ENCODE measurements at regions of chr15 and their contacts with region 1.

Region 1: GRCh38 chr15:41779662-41780157 is 5.4 kb downstream of the MAPKBP1 start:
- DNase-seq: no peak
- ATAC-seq: no peak
- H3K4me3 Mint-ChIP-seq: no peak overlapping the region
- H3K27ac Mint-ChIP-seq: peak overlapping the region; percentile 63
- H3K4me1 Mint-ChIP-seq: peaks cover 61% of the 10 kb centered on the region
- H3K27me3 Mint-ChIP-seq: no peaks in the 10 kb centered on the region

Region 2: GRCh38 chr15:41727143-41727542 is 52.6 kb before region 1 on chr15:
- CTCF ChIA-PET with region 1: no interaction called
- DNase-seq: no peak
- ATAC-seq: no peak
- H3K4me3 Mint-ChIP-seq: no peak overlapping the region
- H3K27ac Mint-ChIP-seq: no peak overlapping the region
- H3K4me1 Mint-ChIP-seq: no peaks in the 10 kb centered on the region
- H3K27me3 Mint-ChIP-seq: no peaks in the 10 kb centered on the region

Region 3: DNA sequence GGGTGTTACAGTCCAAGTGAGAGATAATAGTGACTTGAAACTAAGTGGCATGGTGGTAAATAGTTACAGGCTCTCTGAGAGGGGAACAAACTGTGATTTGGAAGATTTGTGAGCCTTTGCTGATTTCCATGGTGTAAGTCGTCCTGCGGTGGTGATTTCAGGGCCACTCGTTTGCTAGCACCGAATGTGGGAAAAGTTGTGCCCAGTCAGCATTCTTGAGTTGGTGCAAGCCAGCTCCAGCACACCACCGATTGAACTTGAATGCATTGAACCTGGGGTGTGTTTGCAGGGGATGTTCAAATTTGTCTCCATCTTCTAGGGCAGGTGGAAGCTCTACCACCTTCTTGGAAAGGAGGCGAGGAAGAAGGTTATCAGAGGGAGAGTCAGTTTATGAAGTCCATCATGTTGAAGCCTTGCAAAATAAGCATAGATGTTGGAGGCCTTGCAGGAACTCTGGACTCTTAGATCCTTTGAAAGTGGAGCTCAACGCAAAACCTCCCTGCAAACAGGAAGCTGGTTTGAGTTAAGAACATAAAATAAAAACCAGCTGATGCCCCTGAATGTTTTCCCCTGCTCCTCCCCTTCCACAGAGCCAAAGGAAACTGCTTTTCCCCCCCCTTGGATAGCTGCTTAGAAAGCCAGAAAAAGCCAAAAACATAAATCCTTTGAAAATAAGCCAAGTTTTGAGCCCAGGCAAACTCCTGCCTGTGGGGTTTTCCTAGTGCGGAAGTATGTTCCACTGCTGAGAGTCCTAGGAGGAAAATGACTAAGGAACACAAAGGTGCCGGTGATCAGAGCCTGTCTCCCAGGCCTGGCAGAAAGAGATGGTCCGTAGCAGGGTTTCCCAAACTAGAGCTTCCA is 16.5 kb after region 1 on chr15:
- CTCF ChIA-PET with region 1: interaction called, 98 read pairs
- DNase-seq: no peak
- ATAC-seq: no peak
- H3K4me3 Mint-ChIP-seq: no peak overlapping the region
- H3K27ac Mint-ChIP-seq: no peak overlapping the region
- H3K4me1 Mint-ChIP-seq: peaks cover 16% of the 10 kb centered on the region
- H3K27me3 Mint-ChIP-seq: no peaks in the 10 kb centered on the region

Region 4: GRCh38 chr15:41849861-41850260 is 70.2 kb after region 1 on chr15:
- CTCF ChIA-PET with region 1: no interaction called
- DNase-seq: no peak
- ATAC-seq: no peak
- H3K4me3 Mint-ChIP-seq: no peak overlapping the region
- H3K27ac Mint-ChIP-seq: no peak overlapping the region
- H3K4me1 Mint-ChIP-seq: peaks cover 3% of the 10 kb centered on the region
- H3K27me3 Mint-ChIP-seq: no peaks in the 10 kb centered on the region